ENCODE measurements at regions of chr3 and their contacts with region 1.

Region 1: DNA sequence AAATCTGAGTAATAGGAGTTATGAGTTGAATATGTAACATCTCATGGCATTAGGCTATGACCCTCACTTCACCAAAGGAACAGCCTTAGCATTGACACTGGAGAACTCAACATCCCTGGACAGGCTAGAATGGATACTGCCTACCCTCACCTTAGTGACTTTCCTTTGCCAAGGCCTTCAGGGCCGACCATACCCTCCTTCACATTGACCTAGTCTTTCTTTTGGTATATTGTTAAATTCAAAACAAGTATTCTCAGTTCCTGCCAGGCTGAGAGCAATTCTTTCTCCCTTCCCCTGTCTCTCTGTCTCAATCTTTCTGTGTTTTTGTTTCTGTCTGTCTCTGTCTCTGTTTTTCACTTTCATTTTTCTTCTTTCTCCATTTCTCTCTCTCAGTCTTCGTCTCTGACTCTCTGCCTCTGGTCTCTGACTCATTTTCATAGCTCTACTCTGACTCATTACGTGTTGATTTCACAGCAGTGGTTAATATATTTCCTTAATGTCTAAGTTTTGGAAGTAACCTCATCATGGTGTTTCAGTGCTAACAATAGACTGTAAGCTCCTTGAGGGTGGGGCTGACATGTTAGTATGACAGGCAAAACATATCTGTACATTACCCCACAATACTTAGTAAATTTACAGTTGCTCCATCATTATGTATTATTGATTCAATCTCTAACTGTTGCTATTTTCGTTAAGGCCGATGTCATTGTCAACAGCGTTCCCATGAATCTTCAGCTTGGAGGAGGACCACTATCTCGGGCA is 32.5 kb downstream of the PARP15 start:
- DNase-seq: peak; percentile 22
- H3K4me3 Mint-ChIP-seq: peak overlapping the region; percentile 56
- H3K27ac Mint-ChIP-seq: peak overlapping the region; percentile 88
- H3K4me1 Mint-ChIP-seq: peaks cover 24% of the 10 kb centered on the region
- H3K27me3 Mint-ChIP-seq: no peaks in the 10 kb centered on the region

Region 2: GRCh38 chr3:122322095-122323075 is 287.6 kb before region 1 on chr3:
- intact Hi-C with region 1: loop called (anchors 1 kb)
- DNase-seq: peak; percentile 40
- H3K4me3 Mint-ChIP-seq: no peak overlapping the region
- H3K27ac Mint-ChIP-seq: peak overlapping the region; percentile 47
- H3K4me1 Mint-ChIP-seq: peaks cover 32% of the 10 kb centered on the region
- H3K27me3 Mint-ChIP-seq: peaks cover 20% of the 10 kb centered on the region

Region 3: GRCh38 chr3:122564155-122564912 is 45.6 kb before region 1 on chr3 and contains the starts of genes DTX3L and PARP9:
- intact Hi-C with region 1: loop called (anchors 2 kb)
- DNase-seq: peak; percentile 84
- H3K4me3 Mint-ChIP-seq: peak within 1 kb of the TSS; percentile 97
- H3K27ac Mint-ChIP-seq: peak within 1 kb of the TSS; percentile 95
- H3K4me1 Mint-ChIP-seq: peaks cover 65% of the 10 kb centered on the region
- H3K27me3 Mint-ChIP-seq: no peaks in the 10 kb centered on the region
- total RNA-seq, gene DTX3L: 32.4 and 34.3 TPM in 2 replicates
- total RNA-seq, gene PARP9: 29.8 and 31.0 TPM in 2 replicates

Region 4: GRCh38 chr3:122576174-122576940 is 33.6 kb before region 1 on chr3:
- intact Hi-C with region 1: loop called (anchors 1 kb)
- DNase-seq: no peak
- H3K4me3 Mint-ChIP-seq: peak overlapping the region; percentile 35
- H3K27ac Mint-ChIP-seq: peak overlapping the region; percentile 88
- H3K4me1 Mint-ChIP-seq: peaks cover 44% of the 10 kb centered on the region
- H3K27me3 Mint-ChIP-seq: no peaks in the 10 kb centered on the region

Region 5: GRCh38 chr3:122646146-122646988 is 36.4 kb after region 1 on chr3:
- intact Hi-C with region 1: loop called (anchors 5 kb)
- DNase-seq: no peak
- H3K4me3 Mint-ChIP-seq: no peak overlapping the region
- H3K27ac Mint-ChIP-seq: no peak overlapping the region
- H3K4me1 Mint-ChIP-seq: peaks cover 20% of the 10 kb centered on the region
- H3K27me3 Mint-ChIP-seq: peaks cover 23% of the 10 kb centered on the region

Region 6: GRCh38 chr3:122668930-122669730 is 59.2 kb after region 1 on chr3:
- intact Hi-C with region 1: loop called (anchors 2 kb)
- DNase-seq: no peak
- H3K4me3 Mint-ChIP-seq: no peak overlapping the region
- H3K27ac Mint-ChIP-seq: peak overlapping the region; percentile 68
- H3K4me1 Mint-ChIP-seq: peaks cover 16% of the 10 kb centered on the region
- H3K27me3 Mint-ChIP-seq: no peaks in the 10 kb centered on the region